RWPE1 (cell line): ENCODE measurements at regions of chr9 and their contacts with region 1.

Region 1: GRCh38 chr9:128142596-128142995 is 6.7 kb upstream of the LCN2 start:
- DNase-seq: no peak
- H3K27ac ChIP-seq: 0 out of 2 replicates have a peak overlapping the region, but pooled peaks have one; percentile 1
- CTCF ChIP-seq: no peak

Region 2: DNA sequence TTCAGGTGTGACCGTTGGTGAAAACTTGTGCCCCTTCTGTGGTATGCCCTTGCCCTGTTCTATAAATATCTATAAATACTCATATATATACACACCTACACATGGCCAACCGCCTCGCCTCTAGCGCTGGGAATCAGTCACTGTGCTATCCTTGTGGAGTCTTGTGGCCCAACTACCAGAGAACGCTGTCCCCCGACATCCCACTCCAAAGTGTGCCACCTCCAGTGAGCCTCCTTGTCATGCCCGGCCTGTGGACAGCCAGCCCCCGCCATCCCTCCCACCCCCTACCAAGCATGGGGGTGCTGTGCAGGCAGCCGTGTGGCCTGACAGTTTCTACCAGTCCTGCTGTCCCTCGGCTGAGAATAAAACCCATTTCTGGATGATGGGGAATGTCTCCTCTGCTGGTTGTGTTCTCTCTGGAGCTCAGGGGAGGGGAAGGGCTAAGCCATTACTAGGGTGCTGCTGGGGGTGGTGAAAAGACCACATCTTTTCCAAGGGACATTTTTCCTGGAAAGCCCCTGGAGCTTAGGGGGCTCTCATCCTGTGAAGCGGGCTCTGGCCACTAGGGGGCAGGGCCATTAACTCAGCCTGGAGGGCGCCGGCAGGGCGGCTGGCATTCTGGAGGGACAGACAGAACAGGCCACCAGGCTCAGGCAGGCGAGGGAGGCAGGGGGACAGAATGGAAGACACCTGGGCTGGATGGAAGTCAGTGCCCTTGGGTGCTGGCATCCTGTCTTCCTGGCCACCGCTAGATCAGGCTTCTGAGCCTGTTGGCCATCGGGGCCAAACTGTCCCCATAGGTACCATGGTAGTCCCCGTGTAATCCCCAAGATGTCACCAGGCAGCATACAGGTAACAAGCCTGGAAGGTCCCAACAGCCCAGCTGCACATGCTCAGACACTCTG is 112.5 kb after region 1 on chr9:
- CTCF ChIA-PET with region 1: interaction called, 10 read pairs
- POLR2A ChIA-PET with region 1: no interaction called
- DNase-seq: peak; percentile 76
- H3K27ac ChIP-seq: peak overlapping the region; percentile 54
- CTCF ChIP-seq: peak; percentile 98